IMR-90 (cell line): ENCODE measurements at regions of chr11 and their contacts with region 1.

Region 1: DNA sequence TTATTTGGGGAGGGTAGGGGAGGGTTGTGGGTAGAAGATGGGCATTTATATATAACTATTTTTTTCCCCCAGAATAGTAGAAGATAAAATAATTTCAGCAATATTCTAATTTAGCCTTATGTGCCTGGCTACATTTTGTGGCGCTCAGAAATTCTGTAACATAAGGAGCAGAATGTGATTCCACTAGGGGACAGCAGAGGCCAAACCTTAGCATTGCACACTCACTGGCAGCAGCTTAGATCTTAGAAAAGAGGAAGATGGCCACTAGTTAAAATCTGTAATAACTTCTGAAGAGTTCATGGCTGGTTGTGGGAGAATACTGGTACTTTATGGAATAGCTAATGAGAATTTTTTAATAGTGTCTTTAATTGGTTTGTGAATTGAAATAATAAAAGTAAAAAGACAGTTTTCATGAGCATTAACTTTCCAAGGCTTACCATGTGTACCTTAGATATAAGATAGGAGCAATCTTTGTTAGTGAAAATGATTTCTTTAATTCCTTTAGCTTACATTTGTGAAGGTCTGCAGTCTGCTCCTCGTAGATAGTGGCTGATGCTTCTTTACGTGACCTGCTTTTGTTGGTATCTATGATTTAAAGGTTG is 33.1 kb downstream of the DDX10 start:
- DNase-seq: peak; percentile 82
- ATAC-seq: peak; percentile 92
- H3K4me3 ChIP-seq: no peak overlapping the region
- H3K27ac ChIP-seq: no peak overlapping the region
- H3K4me1 ChIP-seq: peaks cover 10% of the 10 kb centered on the region
- H3K27me3 ChIP-seq: no peaks in the 10 kb centered on the region
- CTCF ChIP-seq: peak; percentile 99
- POLR2A ChIP-seq: peak; percentile 60
- RAD21 ChIP-seq: peak; percentile 99

Region 2: GRCh38 chr11:108780119-108780518 is 82.1 kb after region 1 on chr11:
- CTCF ChIA-PET with region 1: no interaction called
- POLR2A ChIA-PET with region 1: no interaction called
- dilution Hi-C with region 1: no loop called
- in situ Hi-C with region 1: no loop called
- intact Hi-C with region 1: no loop called
- DNase-seq: peak; percentile 71
- ATAC-seq: peak; percentile 94
- H3K4me3 ChIP-seq: no peak overlapping the region
- H3K27ac ChIP-seq: no peak overlapping the region
- H3K4me1 ChIP-seq: peaks cover 2% of the 10 kb centered on the region; the same call in 1 of the 2 replicates
- H3K27me3 ChIP-seq: no peaks in the 10 kb centered on the region
- CTCF ChIP-seq: no peak
- POLR2A ChIP-seq: no peak
- RAD21 ChIP-seq: no peak

Region 3: DNA sequence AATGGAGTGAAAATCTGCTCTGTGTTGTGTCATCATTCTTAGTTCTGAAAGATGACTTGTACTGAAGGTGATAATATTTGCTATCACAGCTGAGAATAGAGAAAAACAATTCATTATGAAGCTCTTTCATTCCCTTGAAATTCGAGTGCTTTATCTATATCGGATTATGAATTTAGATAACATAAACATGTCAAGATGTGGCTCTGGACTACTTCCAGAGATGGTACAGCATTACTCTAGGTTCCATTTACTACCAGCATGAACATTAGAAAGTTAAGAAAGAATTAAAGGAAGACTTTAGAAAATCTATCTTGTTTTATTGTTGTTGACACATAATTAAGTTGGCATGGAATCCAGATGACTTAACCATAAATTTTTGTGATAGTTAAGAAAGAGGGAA is 149.3 kb after region 1 on chr11:
- CTCF ChIA-PET with region 1: no interaction called
- POLR2A ChIA-PET with region 1: no interaction called
- dilution Hi-C with region 1: no loop called
- in situ Hi-C with region 1: no loop called
- intact Hi-C with region 1: no loop called
- DNase-seq: no peak
- ATAC-seq: no peak
- H3K4me3 ChIP-seq: no peak overlapping the region
- H3K27ac ChIP-seq: no peak overlapping the region
- H3K4me1 ChIP-seq: no peaks in the 10 kb centered on the region
- H3K27me3 ChIP-seq: no peaks in the 10 kb centered on the region
- CTCF ChIP-seq: no peak
- POLR2A ChIP-seq: no peak
- RAD21 ChIP-seq: no peak

Region 4: GRCh38 chr11:108929241-108929640 is 231.3 kb after region 1 on chr11:
- CTCF ChIA-PET with region 1: interaction called, 4 read pairs
- POLR2A ChIA-PET with region 1: no interaction called
- dilution Hi-C with region 1: no loop called
- in situ Hi-C with region 1: no loop called
- intact Hi-C with region 1: loop called (anchors 5 kb)
- DNase-seq: peak; percentile 99
- ATAC-seq: peak; percentile 82
- H3K4me3 ChIP-seq: peak overlapping the region; percentile 31; the same call in 1 of the 2 replicates
- H3K27ac ChIP-seq: peak overlapping the region; percentile 89
- H3K4me1 ChIP-seq: peaks cover 15% of the 10 kb centered on the region
- H3K27me3 ChIP-seq: no peaks in the 10 kb centered on the region
- CTCF ChIP-seq: no peak
- POLR2A ChIP-seq: peak; percentile 68; the same call in 1 of the 2 replicates
- RAD21 ChIP-seq: peak; percentile 20; the same call in 1 of the 2 replicates

Region 5: DNA sequence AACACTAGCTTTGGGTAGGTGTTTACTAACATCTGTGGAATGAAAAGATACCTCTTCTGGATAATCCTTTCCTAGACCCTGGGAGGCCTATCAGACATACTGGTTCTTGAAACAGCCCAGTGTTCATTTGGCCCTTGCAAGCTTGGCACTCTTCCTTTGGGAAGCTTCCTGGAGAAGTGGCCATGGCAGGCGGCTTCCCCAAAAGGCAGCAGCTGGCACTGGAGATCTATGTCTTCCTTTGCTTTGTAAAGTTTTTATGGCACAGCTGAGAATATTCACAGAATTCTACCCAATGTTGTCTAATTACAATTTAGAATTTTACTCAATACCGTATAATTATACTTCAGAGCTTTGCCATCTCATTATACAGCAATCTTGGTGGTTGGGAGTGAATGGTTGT is 524.8 kb after region 1 on chr11:
- CTCF ChIA-PET with region 1: no interaction called
- POLR2A ChIA-PET with region 1: no interaction called
- dilution Hi-C with region 1: no loop called
- in situ Hi-C with region 1: no loop called
- intact Hi-C with region 1: loop called (anchors 10 kb)
- DNase-seq: no peak
- ATAC-seq: no peak
- H3K4me3 ChIP-seq: no peak overlapping the region
- H3K27ac ChIP-seq: no peak overlapping the region
- H3K4me1 ChIP-seq: no peaks in the 10 kb centered on the region
- H3K27me3 ChIP-seq: no peaks in the 10 kb centered on the region
- CTCF ChIP-seq: no peak
- POLR2A ChIP-seq: no peak
- RAD21 ChIP-seq: no peak

Region 6: GRCh38 chr11:109697140-109697843 is 999.3 kb after region 1 on chr11:
- CTCF ChIA-PET with region 1: interaction called, 15 read pairs
- POLR2A ChIA-PET with region 1: no interaction called
- dilution Hi-C with region 1: no loop called
- in situ Hi-C with region 1: loop called (anchors 10 kb)
- intact Hi-C with region 1: loop called (anchors 1 kb)
- DNase-seq: peak; percentile 50
- ATAC-seq: peak; percentile 98
- H3K4me3 ChIP-seq: no peak overlapping the region
- H3K27ac ChIP-seq: no peak overlapping the region
- H3K4me1 ChIP-seq: no peaks in the 10 kb centered on the region
- H3K27me3 ChIP-seq: no peaks in the 10 kb centered on the region; the same call in 1 of the 2 replicates
- CTCF ChIP-seq: peak; percentile 72
- POLR2A ChIP-seq: no peak
- RAD21 ChIP-seq: peak; percentile 74

Region 7: GRCh38 chr11:109939166-109939810 is 1241.3 kb after region 1 on chr11:
- CTCF ChIA-PET with region 1: interaction called, 5 read pairs
- POLR2A ChIA-PET with region 1: no interaction called
- dilution Hi-C with region 1: no loop called
- in situ Hi-C with region 1: loop called (anchors 25 kb)
- intact Hi-C with region 1: loop called (anchors 1 kb)
- DNase-seq: peak; percentile 84
- ATAC-seq: peak; percentile 72
- H3K4me3 ChIP-seq: no peak overlapping the region
- H3K27ac ChIP-seq: no peak overlapping the region
- H3K4me1 ChIP-seq: peaks cover 3% of the 10 kb centered on the region; the same call in 1 of the 2 replicates
- H3K27me3 ChIP-seq: no peaks in the 10 kb centered on the region
- CTCF ChIP-seq: peak; percentile 82
- POLR2A ChIP-seq: no peak
- RAD21 ChIP-seq: peak; percentile 89